HepG2 (cell line): ENCODE measurements at regions of chr10 and their contacts with region 1.

Region 1: DNA sequence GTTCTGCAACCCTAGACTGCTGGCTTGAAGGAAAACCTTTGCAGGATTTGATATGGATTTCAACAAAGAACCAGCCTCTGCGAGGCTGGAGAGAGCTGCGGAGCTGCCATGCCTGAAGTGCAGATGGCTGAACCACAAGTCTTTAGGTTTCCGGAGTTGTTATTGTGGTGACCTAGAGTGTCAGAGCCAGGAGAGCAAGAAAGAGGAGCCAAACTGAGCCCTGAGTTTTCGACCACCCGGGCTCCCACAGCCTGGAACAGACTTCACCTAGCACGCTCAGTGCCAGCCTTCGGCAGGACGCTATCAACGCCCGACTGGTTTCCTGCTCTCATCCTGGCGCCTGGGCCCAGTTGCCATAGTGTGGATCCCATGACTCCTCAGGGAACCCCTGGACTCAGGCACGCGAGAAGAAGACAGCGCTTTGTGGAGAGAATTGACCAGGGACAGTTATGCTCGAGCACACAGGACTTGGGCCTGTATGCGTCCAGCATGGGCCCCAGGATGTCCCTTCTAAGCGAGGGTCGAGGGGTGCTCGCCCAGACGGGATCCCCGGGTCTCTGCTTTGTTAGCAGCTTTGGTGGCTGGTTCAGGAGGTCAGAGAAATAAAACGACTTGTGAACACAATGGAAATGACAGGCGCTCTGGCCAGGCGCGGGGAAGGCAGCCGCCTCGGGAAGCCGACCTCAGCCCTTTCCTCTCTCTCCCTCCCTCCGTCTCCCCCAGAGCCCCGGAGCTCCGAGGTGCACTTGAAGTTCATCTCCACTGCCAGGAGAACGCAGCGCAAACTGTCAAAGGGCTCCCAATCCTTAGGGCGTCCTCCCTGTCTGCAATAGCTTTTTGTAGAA is 1.8 kb upstream of the GAD2 start:
- DNase-seq: no peak
- ATAC-seq: no peak
- H3K4me3 ChIP-seq: no peak overlapping the region
- H3K27ac ChIP-seq: no peak overlapping the region
- H3K4me1 ChIP-seq: no peaks in the 10 kb centered on the region
- H3K27me3 ChIP-seq: peaks cover 5 to 56% of the 10 kb centered on the region in 2 experiments
- CTCF ChIP-seq: no peak
- EP300 ChIP-seq: no peak
- POLR2A ChIP-seq: no peak
- RAD21 ChIP-seq: no peak

Region 2: DNA sequence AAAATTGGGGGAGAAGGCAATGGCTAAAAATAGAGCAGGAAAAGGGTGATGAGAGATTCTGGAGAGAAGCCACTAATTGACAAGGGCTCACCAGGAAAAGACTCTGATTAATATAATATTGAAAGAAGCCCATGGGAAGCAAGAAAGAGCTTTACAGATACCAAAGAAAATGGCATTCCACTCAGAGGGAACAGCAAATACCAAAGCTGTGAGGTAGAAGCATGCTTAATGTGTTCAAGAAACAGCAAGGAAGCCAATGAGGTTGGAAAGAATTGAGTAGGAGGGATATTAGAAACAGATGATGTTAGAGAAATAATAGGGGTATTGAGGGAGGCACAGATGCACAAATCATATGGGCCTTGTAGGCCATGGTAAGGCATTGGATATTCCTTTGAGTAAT is 150.7 kb before region 1 on chr10:
- CTCF ChIA-PET with region 1: no interaction called
- POLR2A ChIA-PET with region 1: no interaction called
- in situ Hi-C with region 1: no loop called
- intact Hi-C with region 1: no loop called
- DNase-seq: no peak
- ATAC-seq: no peak
- H3K4me3 ChIP-seq: no peak overlapping the region
- H3K27ac ChIP-seq: no peak overlapping the region
- H3K4me1 ChIP-seq: no peaks in the 10 kb centered on the region
- H3K27me3 ChIP-seq: no peaks in the 10 kb centered on the region; a peak in 1 of 5 replicates
- CTCF ChIP-seq: no peak
- EP300 ChIP-seq: no peak
- POLR2A ChIP-seq: no peak
- RAD21 ChIP-seq: no peak

Region 3: DNA sequence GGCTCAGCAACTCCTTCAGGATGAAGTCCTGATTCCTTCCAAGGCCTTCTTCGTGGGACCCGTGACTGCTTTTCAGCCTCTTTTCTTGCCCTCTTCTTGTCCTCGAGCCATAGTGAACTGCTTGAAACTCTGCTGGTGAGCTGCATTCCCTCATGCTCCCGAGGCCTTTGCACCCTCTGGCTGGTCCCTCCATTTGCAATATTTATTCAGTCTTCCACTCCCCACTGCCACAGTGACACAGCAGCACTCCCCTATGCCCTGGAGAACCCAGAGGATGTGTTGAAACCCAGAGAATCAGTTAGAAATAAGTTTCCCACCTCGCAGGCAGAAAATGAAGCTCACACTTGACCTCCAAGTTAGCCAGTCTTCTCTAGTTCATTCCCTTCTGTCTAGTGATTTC is 20.5 kb before region 1 on chr10:
- CTCF ChIA-PET with region 1: no interaction called
- POLR2A ChIA-PET with region 1: no interaction called
- in situ Hi-C with region 1: no loop called
- intact Hi-C with region 1: loop called (anchors 2 kb)
- DNase-seq: no peak
- ATAC-seq: no peak
- H3K4me3 ChIP-seq: no peak overlapping the region
- H3K27ac ChIP-seq: no peak overlapping the region
- H3K4me1 ChIP-seq: no peaks in the 10 kb centered on the region
- H3K27me3 ChIP-seq: 0 out of 5 replicates have a peak, but pooled peaks cover 0 to 8% of the 10 kb centered on the region in 2 experiments
- CTCF ChIP-seq: no peak
- EP300 ChIP-seq: no peak
- POLR2A ChIP-seq: no peak
- RAD21 ChIP-seq: no peak